ENCODE measurements at regions of chr3 and their contacts with region 1.

Region 1: DNA sequence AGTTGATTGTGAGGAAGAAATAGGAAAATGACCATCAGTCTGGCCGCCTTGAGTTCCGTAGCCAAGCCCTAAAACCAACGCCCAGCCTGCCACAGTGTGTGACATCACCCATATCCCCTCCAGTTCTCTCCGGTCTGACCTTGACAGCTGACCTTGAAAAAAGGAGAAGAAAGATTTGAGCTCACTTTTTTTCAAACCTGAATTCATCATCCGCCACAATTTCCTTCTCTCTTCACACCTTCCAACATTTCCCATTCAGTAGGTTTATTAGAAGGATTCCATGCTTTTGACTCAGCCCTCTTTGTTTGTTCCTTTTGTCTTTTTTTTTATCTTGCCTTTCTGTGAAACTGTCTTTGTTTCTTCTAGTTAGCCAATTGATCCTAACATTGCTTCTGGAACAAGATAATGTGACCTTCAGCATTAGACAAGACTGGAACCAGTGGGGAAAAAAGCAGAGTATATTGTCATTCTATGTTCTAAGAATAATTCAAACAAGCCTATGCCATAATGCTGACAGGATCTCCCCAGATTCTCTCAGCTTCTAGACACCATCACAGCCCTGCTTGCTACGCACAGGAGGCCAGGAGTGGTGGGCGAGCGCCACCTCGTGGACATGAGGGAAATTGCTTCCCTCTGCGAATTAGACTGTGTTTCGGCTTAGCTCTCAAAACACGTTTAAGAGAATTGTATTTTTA is 283.1 kb downstream of the FGF12 start:
- DNase-seq: peak; percentile 30 to 76 (median 63)
- H3K4me3 ChIP-seq: no peak overlapping the region
- H3K27ac ChIP-seq: no peak overlapping the region
- H3K4me1 ChIP-seq: no peaks in the 10 kb centered on the region
- H3K27me3 ChIP-seq: no peaks in the 10 kb centered on the region
- CTCF ChIP-seq: peak; percentile 61 to 92 (median 84)
- EP300 ChIP-seq: no peak
- POLR2A ChIP-seq: no peak

Region 2: GRCh38 chr3:191412759-191413158 is 1031.5 kb before region 1 on chr3:
- intact Hi-C with region 1: loop called in 3 of 4 experiments (anchors 5 to 10 kb)
- DNase-seq: no peak
- H3K4me3 ChIP-seq: no peak overlapping the region
- H3K27ac ChIP-seq: no peak overlapping the region
- H3K4me1 ChIP-seq: no peaks in the 10 kb centered on the region
- H3K27me3 ChIP-seq: no peaks in the 10 kb centered on the region
- CTCF ChIP-seq: no peak
- EP300 ChIP-seq: no peak
- POLR2A ChIP-seq: no peak

Region 3: GRCh38 chr3:191502583-191502982 is 941.7 kb before region 1 on chr3:
- intact Hi-C with region 1: no loop called
- DNase-seq: no peak
- H3K4me3 ChIP-seq: no peak overlapping the region
- H3K27ac ChIP-seq: no peak overlapping the region
- H3K4me1 ChIP-seq: peaks cover 3% of the 10 kb centered on the region
- H3K27me3 ChIP-seq: no peaks in the 10 kb centered on the region
- CTCF ChIP-seq: no peak
- EP300 ChIP-seq: no peak
- POLR2A ChIP-seq: no peak